ENCODE measurements at regions of chr19 and their contacts with region 1.

Region 1: DNA sequence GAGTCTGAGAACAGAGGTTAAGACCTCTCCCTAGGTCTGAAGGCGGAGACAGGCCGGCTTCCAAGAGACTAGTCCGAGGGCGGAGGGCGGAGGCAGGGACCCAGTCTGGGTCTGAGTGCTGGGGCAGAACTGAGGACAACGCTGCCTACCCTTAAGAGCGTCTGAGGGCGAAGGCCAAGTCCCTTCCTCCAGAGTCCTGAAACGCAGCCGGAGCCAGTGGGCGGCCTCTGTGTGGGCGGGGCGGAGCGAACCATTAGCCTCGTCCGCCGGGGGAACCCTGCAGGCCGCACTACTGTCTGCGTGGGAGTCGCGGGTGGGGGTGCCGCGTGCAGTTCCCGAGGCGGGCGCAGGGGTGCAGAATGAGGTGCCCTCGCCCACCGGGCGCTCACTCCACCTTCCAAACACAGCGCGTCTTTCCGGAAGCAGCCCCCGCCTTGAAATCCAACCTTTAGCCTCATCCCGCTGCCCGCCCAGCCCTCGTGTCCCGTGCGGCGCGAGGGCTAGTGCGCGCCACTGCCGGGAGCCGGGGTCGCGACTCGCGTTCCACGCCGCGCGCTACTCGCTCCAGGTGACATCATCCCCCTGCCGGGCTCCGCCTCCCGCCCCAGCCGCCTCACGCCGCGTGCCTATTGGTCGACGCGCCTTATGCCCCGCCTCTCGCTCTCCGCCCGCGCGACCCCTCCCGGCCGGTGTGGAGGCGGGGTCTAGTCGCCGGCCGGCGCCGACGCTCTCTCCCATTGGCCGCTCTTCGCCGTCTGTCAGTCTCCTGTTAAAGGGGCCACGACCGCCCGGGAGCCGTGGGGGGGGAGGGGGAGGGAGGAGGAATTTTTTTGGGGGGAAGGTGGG is at the start of gene C19orf73:
- DNase-seq: peak; percentile 93
- H3K4me3 Mint-ChIP-seq: peak within 1 kb of the TSS; percentile 80
- H3K27ac Mint-ChIP-seq: peak within 1 kb of the TSS; percentile 74
- H3K4me1 Mint-ChIP-seq: peaks cover 17% of the 10 kb centered on the region
- H3K27me3 Mint-ChIP-seq: peaks cover 23% of the 10 kb centered on the region
- total RNA-seq, gene C19orf73: 1.7 and 2.3 TPM in 2 replicates

Region 2: GRCh38 chr19:49085020-49085867 is 33.5 kb before region 1 on chr19 and contains the start of gene SNRNP70:
- intact Hi-C with region 1: loop called (anchors 2 kb)
- DNase-seq: peak; percentile 99
- H3K4me3 Mint-ChIP-seq: peak within 1 kb of the TSS; percentile 99
- H3K27ac Mint-ChIP-seq: peak within 1 kb of the TSS; percentile 76
- H3K4me1 Mint-ChIP-seq: peaks cover 18% of the 10 kb centered on the region
- H3K27me3 Mint-ChIP-seq: no peaks in the 10 kb centered on the region
- total RNA-seq, gene SNRNP70: 259 and 279 TPM in 2 replicates

Measured in activated T-helper 2 cell treated with anti-CD3 and anti-CD28 coated beads, Interferon-gamma antibody, Interleukin-2, Interleukin-4, amounts not matched to agents 10 μg/mL and 5 μg/mL and 100 μg/mL, durations not matched to agents 14 hours and 24 hours and 36 hours (primary cell).